ENCODE measurements at regions of chr3 and their contacts with region 1.

Region 1: GRCh38 chr3:196081791-196082618 is at the start of gene TFRC:
- DNase-seq: peak; percentile 99
- H3K4me3 Mint-ChIP-seq: peak within 1 kb of the TSS; percentile 89
- H3K27ac Mint-ChIP-seq: peak within 1 kb of the TSS; percentile 92
- H3K4me1 Mint-ChIP-seq: peaks cover 34% of the 10 kb centered on the region
- H3K27me3 Mint-ChIP-seq: no peaks in the 10 kb centered on the region
- total RNA-seq, gene TFRC: 725 and 748 TPM in 2 replicates

Region 2: DNA sequence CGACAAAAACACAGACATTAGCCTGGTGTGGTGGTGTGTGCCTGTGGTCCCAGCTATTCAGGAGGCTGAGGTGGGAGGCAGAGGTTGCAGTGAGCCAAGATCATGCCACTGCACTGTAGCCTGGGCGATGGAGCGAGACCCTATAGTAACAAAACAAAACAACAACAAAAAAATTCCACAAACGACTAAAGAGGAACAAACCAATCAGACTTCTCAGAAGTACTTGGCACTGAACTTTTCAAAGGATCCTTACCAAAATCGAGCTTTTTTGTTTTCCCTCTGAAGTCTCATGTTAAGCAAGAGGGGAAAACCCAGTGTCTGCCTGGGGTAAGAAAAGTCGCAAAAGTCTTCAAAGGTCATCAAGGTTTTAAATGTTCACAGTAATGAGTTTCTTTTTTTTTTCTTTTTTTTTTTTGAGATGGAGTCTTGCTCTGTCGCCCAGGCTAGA is 30.0 kb after region 1 on chr3:
- intact Hi-C with region 1: loop called (anchors 1 kb)
- DNase-seq: peak; percentile 85
- H3K4me3 Mint-ChIP-seq: peak overlapping the region; percentile 72
- H3K27ac Mint-ChIP-seq: peak overlapping the region; percentile 99
- H3K4me1 Mint-ChIP-seq: peaks cover 19% of the 10 kb centered on the region
- H3K27me3 Mint-ChIP-seq: no peaks in the 10 kb centered on the region

Measured in activated CD4-positive, alpha-beta T cell treated with anti-CD3 and anti-CD28 coated beads, Interleukin-2, amount 10 ng/mL, durations not matched to agents 24 days and 14 days (primary cell).